Endothelial cell of umbilical vein (primary cell): ENCODE measurements at regions of chr10 and their contacts with region 1.

Region 1: GRCh38 chr10:89144836-89145235 is 62.3 kb downstream of the CH25H start:
- DNase-seq: peak; percentile 84
- H3K4me3 ChIP-seq: peak overlapping the region in 1 of 3 experiments; percentile 23
- H3K27ac ChIP-seq: peak overlapping the region; percentile 1
- H3K4me1 ChIP-seq: peaks cover 19% of the 10 kb centered on the region
- H3K27me3 ChIP-seq: no peaks in the 10 kb centered on the region
- CTCF ChIP-seq: no peak
- POLR2A ChIP-seq: no peak

Region 2: GRCh38 chr10:89079961-89080360 is 64.9 kb before region 1 on chr10:
- CTCF ChIA-PET with region 1: no interaction called
- POLR2A ChIA-PET with region 1: no interaction called
- dilution Hi-C with region 1: no loop called
- intact Hi-C with region 1: loop called (anchors 2 kb)
- DNase-seq: peak; percentile 64
- H3K4me3 ChIP-seq: no peak overlapping the region
- H3K27ac ChIP-seq: no peak overlapping the region
- H3K4me1 ChIP-seq: peaks cover 33% of the 10 kb centered on the region
- H3K27me3 ChIP-seq: no peaks in the 10 kb centered on the region
- CTCF ChIP-seq: no peak
- POLR2A ChIP-seq: no peak

Region 3: DNA sequence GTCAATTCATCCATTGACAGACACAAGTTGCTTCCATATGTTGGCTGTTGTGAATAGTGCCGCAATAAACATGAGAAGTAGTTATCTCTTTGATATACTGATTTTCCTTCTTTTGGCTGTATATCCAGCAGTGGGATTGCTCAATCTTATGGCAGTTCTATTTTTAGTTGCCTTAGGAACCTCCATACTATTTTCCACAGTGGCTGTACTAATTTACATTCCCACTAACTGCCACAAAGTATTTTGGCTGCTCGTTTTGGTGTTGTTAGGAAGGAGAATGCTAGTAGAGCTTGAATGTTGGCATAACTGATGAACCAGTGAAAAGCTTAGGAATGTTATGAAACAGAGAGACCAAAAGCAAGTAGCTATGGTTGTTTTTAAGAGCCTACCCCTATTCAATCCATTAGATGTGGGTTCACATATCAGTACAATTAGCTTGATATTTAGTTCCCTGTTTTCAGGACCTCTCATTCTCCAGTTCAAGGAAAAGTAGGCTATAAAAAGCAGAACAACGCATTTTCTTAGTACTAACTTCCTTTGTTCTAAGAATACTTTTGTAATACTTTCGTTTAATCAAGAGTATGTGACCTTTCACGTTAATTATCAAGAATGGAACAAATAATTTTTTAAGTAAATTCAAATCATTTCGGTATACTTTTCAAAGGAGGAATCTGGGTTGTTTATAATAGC is 53.9 kb before region 1 on chr10:
- CTCF ChIA-PET with region 1: no interaction called
- POLR2A ChIA-PET with region 1: no interaction called
- dilution Hi-C with region 1: no loop called
- intact Hi-C with region 1: no loop called
- DNase-seq: no peak
- H3K4me3 ChIP-seq: no peak overlapping the region
- H3K27ac ChIP-seq: no peak overlapping the region
- H3K4me1 ChIP-seq: no peaks in the 10 kb centered on the region
- H3K27me3 ChIP-seq: no peaks in the 10 kb centered on the region
- CTCF ChIP-seq: no peak
- POLR2A ChIP-seq: no peak

Region 4: DNA sequence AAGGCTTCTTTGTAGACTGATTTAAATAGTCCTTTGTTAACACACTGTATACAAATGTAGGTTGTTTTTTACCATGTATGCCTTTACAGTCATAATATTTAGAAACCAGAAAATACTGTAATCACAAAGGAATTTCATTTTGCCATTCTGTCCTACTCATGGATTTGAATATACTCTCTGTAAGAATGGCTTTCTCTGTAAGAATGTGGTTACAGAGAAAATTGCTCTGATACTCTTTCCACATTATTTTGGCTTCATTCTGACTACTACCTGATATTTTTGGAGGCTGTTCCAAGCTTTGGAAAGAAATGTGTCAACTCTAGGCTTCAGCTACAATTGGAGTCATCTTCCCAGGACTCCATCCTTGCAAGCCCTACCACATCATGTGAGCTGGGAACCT is 38.7 kb after region 1 on chr10:
- CTCF ChIA-PET with region 1: no interaction called
- POLR2A ChIA-PET with region 1: no interaction called
- dilution Hi-C with region 1: no loop called
- intact Hi-C with region 1: no loop called
- DNase-seq: no peak
- H3K4me3 ChIP-seq: no peak overlapping the region
- H3K27ac ChIP-seq: no peak overlapping the region
- H3K4me1 ChIP-seq: no peaks in the 10 kb centered on the region
- H3K27me3 ChIP-seq: peaks cover 0 to 6% of the 10 kb centered on the region in 2 experiments
- CTCF ChIP-seq: no peak
- POLR2A ChIP-seq: no peak

Region 5: DNA sequence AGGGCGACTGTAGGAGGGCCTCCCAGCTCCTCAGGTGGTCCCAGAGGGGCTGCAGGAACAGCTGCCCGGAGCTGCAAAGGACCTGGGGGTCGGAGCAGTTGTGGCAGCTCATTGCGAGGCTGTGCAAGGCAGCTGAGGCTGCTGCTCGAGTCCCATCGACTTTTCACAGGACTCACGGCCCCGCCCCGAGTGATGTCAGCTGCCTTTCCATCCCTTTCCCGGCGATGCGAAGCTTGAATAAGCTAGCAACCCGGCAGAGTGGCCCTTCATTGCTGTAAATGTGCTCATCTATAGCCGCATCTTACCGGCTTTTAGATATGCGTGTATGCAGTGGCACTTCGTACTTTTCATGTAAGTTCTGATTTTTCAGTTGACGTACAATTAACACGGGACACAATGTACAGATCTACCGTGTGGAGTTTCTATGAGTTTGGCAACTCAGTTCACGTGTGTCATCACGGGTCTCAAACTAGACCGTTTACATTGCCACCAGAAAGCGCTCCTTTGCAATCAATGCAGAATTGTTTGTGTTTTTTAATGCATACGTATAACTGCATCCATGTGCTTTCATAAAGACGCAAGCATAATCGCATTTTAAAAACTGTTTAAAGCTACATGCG is 62.5 kb after region 1 on chr10 and contains the start of gene CH25H:
- CTCF ChIA-PET with region 1: no interaction called
- POLR2A ChIA-PET with region 1: no interaction called
- dilution Hi-C with region 1: no loop called
- intact Hi-C with region 1: loop called (anchors 2 kb)
- DNase-seq: peak; percentile 76
- H3K4me3 ChIP-seq: peak within 1 kb of the TSS; percentile 34 to 84 (median 49)
- H3K27ac ChIP-seq: peak within 1 kb of the TSS; percentile 7
- H3K4me1 ChIP-seq: peaks cover 23% of the 10 kb centered on the region
- H3K27me3 ChIP-seq: peaks cover 16 to 27% of the 10 kb centered on the region in 2 experiments
- CTCF ChIP-seq: no peak
- POLR2A ChIP-seq: no peak
- total RNA-seq, gene CH25H: 0.32 TPM in 1 of 2 replicates, not detected in the other

Region 6: DNA sequence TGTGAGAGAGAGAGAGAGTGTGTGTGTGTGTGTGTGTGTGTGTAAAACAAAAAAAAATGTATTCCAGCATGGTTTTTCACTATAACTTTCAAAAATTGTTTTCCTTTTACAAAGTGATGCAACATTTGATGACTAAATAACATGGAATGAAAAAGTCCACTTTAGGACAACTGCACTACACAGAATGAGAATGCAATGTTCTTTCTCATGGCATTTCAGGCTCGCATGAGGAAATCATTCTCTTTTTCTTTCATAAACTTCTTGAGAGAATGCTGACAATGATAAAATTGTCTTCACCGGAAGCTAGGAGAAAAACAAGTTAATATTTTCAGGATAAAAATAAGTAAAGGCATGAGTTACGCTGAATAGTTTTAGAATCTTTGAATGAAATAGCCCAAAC is 336.8 kb after region 1 on chr10:
- CTCF ChIA-PET with region 1: no interaction called
- POLR2A ChIA-PET with region 1: no interaction called
- dilution Hi-C with region 1: no loop called
- intact Hi-C with region 1: no loop called
- DNase-seq: peak; percentile 42
- H3K4me3 ChIP-seq: no peak overlapping the region
- H3K27ac ChIP-seq: no peak overlapping the region
- H3K4me1 ChIP-seq: peaks cover 13% of the 10 kb centered on the region
- H3K27me3 ChIP-seq: no peaks in the 10 kb centered on the region
- CTCF ChIP-seq: no peak
- POLR2A ChIP-seq: no peak